ENCODE measurements at regions of chr4 and their contacts with region 1.

Region 1: DNA sequence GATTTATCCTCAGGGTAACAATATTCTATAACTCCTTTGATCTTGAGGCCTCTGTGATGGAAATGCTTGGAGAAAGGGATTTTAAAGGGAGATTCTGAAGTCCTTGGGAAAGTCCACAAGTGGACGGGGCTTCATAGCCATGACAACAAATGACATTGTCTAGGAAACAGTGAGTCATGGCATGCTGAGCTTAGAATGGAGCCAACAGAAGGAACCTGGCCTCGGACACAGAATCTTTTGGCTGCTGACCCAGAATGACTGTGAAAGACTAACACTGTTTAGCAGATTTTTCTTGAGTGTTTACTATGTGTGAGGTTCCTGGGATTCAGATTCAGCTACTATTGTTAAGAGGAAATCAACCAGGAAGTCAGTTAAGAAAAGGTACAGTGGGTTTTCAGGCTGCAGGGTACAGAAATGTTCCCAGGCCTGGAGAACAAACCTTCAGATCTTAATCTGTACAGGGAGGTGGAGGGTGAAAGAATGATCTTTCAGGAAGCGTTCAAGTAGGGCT is 18.1 kb upstream of the CXCL2 start:
- DNase-seq: peak; percentile 98
- ATAC-seq: peak; percentile 77
- H3K4me3 ChIP-seq: no peak overlapping the region
- H3K27ac ChIP-seq: peak overlapping the region; percentile 96
- H3K4me1 ChIP-seq: peaks cover 59% of the 10 kb centered on the region
- H3K27me3 ChIP-seq: no peaks in the 10 kb centered on the region
- CTCF ChIP-seq: no peak

Region 2: GRCh38 chr4:73978886-73979285 is 138.2 kb before region 1 on chr4:
- CTCF ChIA-PET with region 1: no interaction called
- POLR2A ChIA-PET with region 1: no interaction called
- intact Hi-C with region 1: loop called (anchors 1 kb)
- DNase-seq: peak; percentile 94
- ATAC-seq: peak; percentile 89
- H3K4me3 ChIP-seq: no peak overlapping the region
- H3K27ac ChIP-seq: peak overlapping the region; percentile 94
- H3K4me1 ChIP-seq: peaks cover 31% of the 10 kb centered on the region
- H3K27me3 ChIP-seq: no peaks in the 10 kb centered on the region
- CTCF ChIP-seq: no peak

Region 3: DNA sequence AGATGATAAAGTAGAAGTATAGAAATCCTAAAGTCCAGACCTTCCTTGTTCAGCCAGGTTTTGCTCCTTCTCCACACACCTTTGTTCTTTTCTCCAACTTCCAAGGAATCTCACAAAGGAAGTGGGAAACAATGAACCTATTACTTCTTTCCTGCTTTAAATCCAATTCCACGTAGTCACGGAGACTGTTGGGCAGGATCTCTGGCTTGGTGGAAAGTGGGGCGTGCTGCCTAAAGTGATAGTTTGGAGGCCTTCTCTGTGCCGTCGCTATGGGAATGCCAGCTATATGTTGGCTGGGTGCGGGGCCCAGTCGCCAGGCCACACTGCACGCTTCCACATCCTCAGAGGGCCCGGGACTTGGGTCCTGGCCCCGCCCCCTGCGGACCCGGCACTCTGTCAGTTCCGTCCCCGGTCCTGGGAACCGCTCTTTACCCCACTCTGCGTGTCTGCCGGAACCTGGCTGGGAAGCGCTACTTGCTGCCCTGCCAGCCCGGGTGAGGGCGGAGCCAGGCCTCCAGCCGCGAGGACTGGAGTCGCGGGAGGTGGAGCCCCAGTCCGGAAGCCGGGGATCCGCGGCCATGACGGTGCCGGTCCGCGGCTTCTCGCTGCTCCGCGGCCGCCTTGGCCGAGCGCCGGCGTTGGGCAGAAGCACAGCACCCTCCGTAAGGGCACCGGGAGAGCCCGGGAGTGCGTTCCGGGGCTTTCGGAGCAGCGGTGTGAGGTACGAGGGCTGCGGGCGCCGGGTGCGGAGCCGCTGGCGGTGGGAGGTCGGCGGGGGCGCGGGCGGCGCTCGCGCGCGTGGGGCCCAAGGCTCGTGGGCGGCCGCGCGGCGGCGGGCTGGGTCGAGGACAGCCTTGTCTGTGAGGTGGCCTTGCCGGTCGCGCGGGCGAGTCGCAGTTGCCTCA is 40.7 kb after region 1 on chr4 and contains the start of gene MTHFD2L:
- CTCF ChIA-PET with region 1: no interaction called
- POLR2A ChIA-PET with region 1: no interaction called
- intact Hi-C with region 1: loop called (anchors 1 kb)
- DNase-seq: peak; percentile 99
- ATAC-seq: peak; percentile 96
- H3K4me3 ChIP-seq: peak within 1 kb of the TSS; percentile 82
- H3K27ac ChIP-seq: peak within 1 kb of the TSS; percentile 84
- H3K4me1 ChIP-seq: peaks cover 27% of the 10 kb centered on the region
- H3K27me3 ChIP-seq: no peaks in the 10 kb centered on the region
- CTCF ChIP-seq: no peak
- total RNA-seq, gene MTHFD2L: 33.4 and 34.0 TPM in 2 replicates